Endothelial cell of umbilical vein (primary cell): ENCODE measurements at regions of chr1 and their contacts with region 1.

Region 1: GRCh38 chr1:109075531-109076490 is at the start of gene TAF13:
- DNase-seq: peak; percentile 96
- H3K4me3 ChIP-seq: peak within 1 kb of the TSS; percentile 53 to 90 (median 67)
- H3K27ac ChIP-seq: peak within 1 kb of the TSS; percentile 93
- H3K4me1 ChIP-seq: peaks cover 21% of the 10 kb centered on the region
- H3K27me3 ChIP-seq: no peaks in the 10 kb centered on the region
- CTCF ChIP-seq: peak in 1 of 2 donors; percentile 4
- POLR2A ChIP-seq: peak; percentile 97
- total RNA-seq, gene TAF13: 42.3 and 54.9 TPM in 2 replicates

Region 2: GRCh38 chr1:108933944-108934343 is 141.9 kb before region 1 on chr1:
- CTCF ChIA-PET with region 1: no interaction called
- POLR2A ChIA-PET with region 1: no interaction called
- dilution Hi-C with region 1: no loop called
- intact Hi-C with region 1: no loop called
- DNase-seq: no peak
- H3K4me3 ChIP-seq: no peak overlapping the region
- H3K27ac ChIP-seq: no peak overlapping the region
- H3K4me1 ChIP-seq: no peaks in the 10 kb centered on the region
- H3K27me3 ChIP-seq: no peaks in the 10 kb centered on the region
- CTCF ChIP-seq: no peak
- POLR2A ChIP-seq: no peak

Region 3: GRCh38 chr1:108972951-108973350 is 102.9 kb before region 1 on chr1:
- CTCF ChIA-PET with region 1: no interaction called
- POLR2A ChIA-PET with region 1: no interaction called
- dilution Hi-C with region 1: no loop called
- intact Hi-C with region 1: no loop called
- DNase-seq: no peak
- H3K4me3 ChIP-seq: no peak overlapping the region
- H3K27ac ChIP-seq: no peak overlapping the region
- H3K4me1 ChIP-seq: no peaks in the 10 kb centered on the region
- H3K27me3 ChIP-seq: no peaks in the 10 kb centered on the region
- CTCF ChIP-seq: no peak
- POLR2A ChIP-seq: no peak

Region 4: GRCh38 chr1:109090196-109091077 is 14.6 kb after region 1 on chr1 and contains the start of gene TMEM167B:
- CTCF ChIA-PET with region 1: interaction called, 7 read pairs
- POLR2A ChIA-PET with region 1: interaction called, 6 read pairs
- dilution Hi-C with region 1: no loop called
- intact Hi-C with region 1: loop called (anchors 1 kb)
- DNase-seq: peak; percentile 99
- H3K4me3 ChIP-seq: peak within 1 kb of the TSS; percentile 97 to 99 (median 97)
- H3K27ac ChIP-seq: peak within 1 kb of the TSS; percentile 63
- H3K4me1 ChIP-seq: peaks cover 13% of the 10 kb centered on the region
- H3K27me3 ChIP-seq: no peaks in the 10 kb centered on the region
- CTCF ChIP-seq: no peak
- POLR2A ChIP-seq: peak; percentile 74
- total RNA-seq, gene TMEM167B: 19.9 and 21.1 TPM in 2 replicates